Activated B cell treated with CpG ODN at 0.5 μM for 24 hours (primary cell): ENCODE measurements at regions of chr10 and their contacts with region 1.

Region 1: GRCh38 chr10:26931223-26931622 is 70.5 kb upstream of the ABI1 start:
- DNase-seq: no peak
- ATAC-seq: peak; percentile 64
- H3K4me3 Mint-ChIP-seq: no peak overlapping the region
- H3K27ac Mint-ChIP-seq: no peak overlapping the region
- H3K4me1 Mint-ChIP-seq: peaks cover 6% of the 10 kb centered on the region
- H3K27me3 Mint-ChIP-seq: peaks cover 4% of the 10 kb centered on the region
- CTCF ChIP-seq: no peak

Region 2: GRCh38 chr10:26903431-26904217 is 27.6 kb before region 1 on chr10:
- CTCF ChIA-PET with region 1: no interaction called
- POLR2A ChIA-PET with region 1: interaction called, 14 read pairs
- intact Hi-C with region 1: no loop called
- DNase-seq: no peak
- ATAC-seq: no peak
- H3K4me3 Mint-ChIP-seq: no peak overlapping the region
- H3K27ac Mint-ChIP-seq: no peak overlapping the region
- H3K4me1 Mint-ChIP-seq: no peaks in the 10 kb centered on the region
- H3K27me3 Mint-ChIP-seq: peaks cover 8% of the 10 kb centered on the region
- CTCF ChIP-seq: no peak

Region 3: GRCh38 chr10:27138277-27138676 is 207.1 kb after region 1 on chr10:
- CTCF ChIA-PET with region 1: no interaction called
- POLR2A ChIA-PET with region 1: interaction called, 12 read pairs
- intact Hi-C with region 1: no loop called
- DNase-seq: no peak
- ATAC-seq: no peak
- H3K4me3 Mint-ChIP-seq: no peak overlapping the region
- H3K27ac Mint-ChIP-seq: no peak overlapping the region
- H3K4me1 Mint-ChIP-seq: peaks cover 9% of the 10 kb centered on the region
- H3K27me3 Mint-ChIP-seq: no peaks in the 10 kb centered on the region
- CTCF ChIP-seq: no peak

Region 4: GRCh38 chr10:27490807-27491206 is 559.6 kb after region 1 on chr10:
- CTCF ChIA-PET with region 1: no interaction called
- POLR2A ChIA-PET with region 1: no interaction called
- intact Hi-C with region 1: no loop called
- DNase-seq: no peak
- ATAC-seq: no peak
- H3K4me3 Mint-ChIP-seq: no peak overlapping the region
- H3K27ac Mint-ChIP-seq: no peak overlapping the region
- H3K4me1 Mint-ChIP-seq: no peaks in the 10 kb centered on the region
- H3K27me3 Mint-ChIP-seq: peaks cover 31% of the 10 kb centered on the region
- CTCF ChIP-seq: no peak